Mucosa of descending colon (tissue), 3 donors: ENCODE measurements at regions of chr6 and their contacts with region 1.

Region 1: DNA sequence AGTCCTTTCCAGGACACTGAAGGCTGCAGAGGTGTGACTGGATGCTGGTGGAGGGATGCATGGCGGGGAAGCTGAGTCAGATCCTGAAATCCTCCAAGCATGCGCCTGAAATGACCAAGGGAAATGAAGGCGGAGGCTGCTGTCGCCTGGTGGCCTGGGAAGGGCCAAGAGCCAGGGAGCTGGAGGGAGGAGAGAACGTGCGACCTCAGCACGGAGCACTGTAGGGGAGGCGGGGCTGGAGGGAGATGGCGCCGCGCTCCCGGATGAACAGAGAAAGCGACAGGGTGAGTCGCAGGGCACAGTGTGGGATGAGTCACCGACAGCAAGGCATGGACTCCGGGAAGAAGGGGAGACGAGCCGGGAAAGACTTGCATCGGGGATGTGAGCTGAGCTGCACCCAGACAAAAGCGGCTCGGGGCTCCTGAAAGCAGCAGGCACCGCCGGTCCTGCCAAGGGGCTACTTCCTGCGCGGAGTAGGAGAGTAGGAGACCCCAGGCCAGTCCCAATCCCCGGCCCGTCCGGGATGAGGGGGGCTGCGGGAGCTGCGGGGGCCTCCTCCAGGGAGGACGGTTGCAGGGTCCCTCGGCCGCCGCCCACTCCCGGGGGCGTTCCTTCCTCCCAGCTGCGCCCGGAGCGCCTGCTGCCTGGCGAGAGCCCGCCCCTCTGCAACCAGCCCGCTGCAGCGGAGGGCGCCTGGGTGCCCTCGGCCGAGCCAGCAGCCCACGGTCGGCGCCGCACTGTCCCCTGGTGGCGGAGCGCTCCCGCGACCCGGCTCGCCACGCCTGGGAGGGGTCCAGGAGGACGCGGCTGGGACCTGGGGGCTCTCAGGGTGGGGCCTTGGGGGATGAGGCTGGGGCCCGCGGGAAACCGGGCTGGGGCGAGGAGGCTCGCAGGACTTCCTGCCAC is 11.0 kb upstream of the NQO2 start:
- DNase-seq: peak; percentile 89 to 94 (median 93)
- ATAC-seq: peak; percentile 79
- H3K4me3 ChIP-seq: peak overlapping the region; percentile 54
- H3K4me1 ChIP-seq: peaks cover 32% of the 10 kb centered on the region
- CTCF ChIP-seq: peak; percentile 78

Region 2: GRCh38 chr6:2952557-2953095 is 36.1 kb before region 1 on chr6:
- intact Hi-C with region 1: loop called (anchors 2 kb)
- DNase-seq: peak; percentile 85 to 90 (median 89)
- ATAC-seq: peak; percentile 97
- H3K4me3 ChIP-seq: no peak overlapping the region
- H3K4me1 ChIP-seq: peaks cover 7% of the 10 kb centered on the region
- CTCF ChIP-seq: peak; percentile 99

Region 3: DNA sequence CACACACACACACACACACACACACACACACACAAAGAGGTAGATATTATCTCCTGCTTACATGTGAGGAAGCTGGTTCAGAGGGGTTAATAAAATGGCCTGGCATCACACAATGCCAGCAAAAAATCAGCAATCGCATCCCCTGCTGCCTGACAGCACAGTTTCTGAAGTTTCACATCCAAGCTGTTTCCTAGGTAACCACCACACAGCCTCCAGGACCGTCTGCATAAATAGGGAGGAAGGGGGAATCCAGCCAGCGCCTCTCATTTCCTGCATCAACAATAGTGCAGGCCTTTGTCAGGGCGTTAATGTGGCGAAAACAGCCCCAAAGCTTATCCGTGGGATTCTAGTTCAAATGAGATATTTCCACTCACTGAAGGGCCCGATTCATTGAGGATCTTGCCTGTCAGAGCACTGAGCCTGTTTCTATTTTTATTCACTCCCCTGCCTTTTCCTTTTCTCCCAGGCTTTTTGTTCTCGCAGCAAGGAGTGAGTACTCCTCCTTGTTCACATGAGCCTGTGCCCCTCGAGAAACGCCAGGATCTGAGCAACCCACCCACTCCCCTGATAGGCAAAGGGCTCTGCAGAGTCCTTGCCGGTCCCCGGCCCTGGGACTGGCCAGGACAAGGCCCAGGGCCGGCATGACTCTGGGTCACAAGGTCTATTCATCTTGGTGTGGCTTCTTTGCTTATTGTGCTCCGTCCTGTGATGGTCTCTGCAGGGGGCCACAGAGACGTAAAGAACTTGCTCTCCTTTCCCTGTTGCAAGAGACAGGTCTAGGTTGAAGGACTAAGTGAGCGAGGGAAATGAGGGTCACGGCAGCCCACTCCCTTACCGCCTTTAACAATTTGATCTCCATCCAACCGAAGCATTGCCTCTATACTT is 206.1 kb after region 1 on chr6:
- intact Hi-C with region 1: no loop called
- DNase-seq: no peak
- ATAC-seq: no peak
- H3K4me3 ChIP-seq: no peak overlapping the region
- H3K4me1 ChIP-seq: no peaks in the 10 kb centered on the region
- CTCF ChIP-seq: no peak